ENCODE measurements at regions of chr10 and their contacts with region 1.

Region 1: DNA sequence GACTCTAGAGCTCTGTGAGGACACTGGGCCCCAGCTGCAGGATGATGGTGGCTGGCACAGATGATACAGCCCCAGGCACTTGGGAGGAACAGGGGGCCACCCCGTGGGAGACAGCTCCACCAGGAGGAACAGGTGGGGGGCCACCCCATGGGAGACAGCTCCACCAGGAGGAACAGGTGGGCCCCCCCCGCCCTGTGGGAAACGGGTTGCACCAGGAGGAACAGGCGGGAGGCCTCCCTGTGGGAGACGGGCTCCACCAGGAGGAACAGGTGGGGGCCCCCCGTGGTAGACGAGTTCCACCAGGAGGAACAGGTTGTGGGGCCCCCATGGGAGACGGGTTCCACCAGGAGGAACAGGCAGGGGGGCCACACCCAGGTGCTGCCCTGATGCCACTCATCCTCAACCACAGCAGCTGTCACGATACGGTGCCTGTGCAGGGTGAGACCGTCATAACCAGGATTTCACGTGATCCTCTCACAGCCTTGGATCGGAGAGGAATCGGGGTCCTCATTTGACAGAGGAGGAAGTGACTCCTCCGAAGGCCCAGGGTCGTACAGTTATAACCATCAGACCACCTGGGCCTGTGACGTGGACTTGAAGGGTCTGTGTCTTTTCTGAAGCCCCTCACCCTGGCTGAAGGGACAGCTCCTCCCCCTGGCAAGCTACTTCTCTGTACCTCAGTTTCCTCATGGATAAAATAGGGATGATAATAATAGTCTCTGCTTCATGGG is 49.2 kb upstream of the NANOS1 start:
- DNase-seq: no peak
- H3K27ac ChIP-seq: no peak overlapping the region
- CTCF ChIP-seq: no peak

Region 2: DNA sequence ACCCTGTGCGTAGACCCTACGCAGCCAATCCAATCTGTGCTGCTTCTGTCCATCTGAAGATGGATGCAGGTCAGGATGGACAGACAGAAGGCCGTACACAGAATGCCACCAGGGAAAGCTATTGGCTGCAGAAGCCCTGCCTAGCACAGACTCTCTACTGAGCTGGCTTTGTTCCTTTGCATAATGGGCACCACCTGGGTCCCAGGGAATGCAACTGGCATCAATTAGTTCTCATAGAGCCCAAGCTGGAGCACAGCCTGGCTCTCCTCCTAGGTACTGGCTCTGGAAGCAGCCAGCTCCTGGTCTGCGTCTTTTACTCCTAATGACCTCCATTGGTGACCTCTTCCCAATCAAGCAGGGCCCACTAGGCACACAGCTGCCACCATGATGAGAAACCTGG is 198.8 kb before region 1 on chr10:
- CTCF ChIA-PET with region 1: no interaction called
- POLR2A ChIA-PET with region 1: no interaction called
- DNase-seq: no peak
- H3K27ac ChIP-seq: no peak overlapping the region
- CTCF ChIP-seq: no peak

Region 3: GRCh38 chr10:118832241-118832651 is 148.1 kb before region 1 on chr10:
- CTCF ChIA-PET with region 1: interaction called, 10 read pairs
- POLR2A ChIA-PET with region 1: no interaction called
- DNase-seq: no peak
- H3K27ac ChIP-seq: peak overlapping the region; percentile 25
- CTCF ChIP-seq: no peak